ENCODE measurements at regions of chr21 and their contacts with region 1.

Region 1: DNA sequence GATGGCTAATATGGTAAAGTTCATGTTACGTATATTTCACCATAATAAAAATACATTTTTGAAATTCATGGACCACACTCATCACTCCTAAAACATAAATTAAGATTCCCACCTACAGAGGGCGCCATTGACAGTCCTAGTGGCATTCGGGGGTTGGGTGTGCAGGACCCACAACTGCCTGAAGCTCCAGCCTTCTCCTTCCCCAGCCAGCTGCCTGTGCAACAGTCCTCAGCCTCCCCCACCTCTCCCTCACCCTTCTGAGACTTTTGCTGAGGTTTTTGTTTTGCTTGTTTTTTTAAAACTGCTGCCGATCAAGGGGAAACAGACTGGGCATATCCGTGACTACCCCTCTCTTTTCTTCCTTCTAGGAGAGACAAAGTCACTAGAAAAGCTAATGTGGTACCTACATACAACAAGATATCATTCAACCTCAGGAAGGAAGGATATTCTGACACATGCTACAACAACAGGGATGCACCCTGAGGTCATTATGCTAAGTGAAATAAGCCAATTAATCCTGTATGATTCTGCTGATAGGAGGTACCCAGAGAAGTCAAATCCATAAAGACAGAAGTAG is 9.2 kb upstream of the EVA1C start:
- DNase-seq: peak; percentile 81
- H3K4me3 ChIP-seq: no peak overlapping the region
- H3K27ac ChIP-seq: no peak overlapping the region
- H3K4me1 ChIP-seq: no peaks in the 10 kb centered on the region; a peak in 1 of 4 replicates
- H3K27me3 ChIP-seq: no peaks in the 10 kb centered on the region
- CTCF ChIP-seq: peak; percentile 79
- EP300 ChIP-seq: no peak
- RAD21 ChIP-seq: peak; percentile 82

Region 2: GRCh38 chr21:32392880-32393676 is 10.2 kb before region 1 on chr21 and contains the start of gene URB1:
- CTCF ChIA-PET with region 1: interaction called, 15 read pairs
- POLR2A ChIA-PET with region 1: no interaction called
- DNase-seq: peak; percentile 98
- H3K4me3 ChIP-seq: peak within 1 kb of the TSS; percentile 98 to 99
- H3K27ac ChIP-seq: peak within 1 kb of the TSS; percentile 73 to 88; a peak in 3 of 4 replicates
- H3K4me1 ChIP-seq: peaks cover 5 to 32% of the 10 kb centered on the region in 2 experiments; a peak in 3 of 4 replicates
- H3K27me3 ChIP-seq: no peaks in the 10 kb centered on the region
- CTCF ChIP-seq: peak; percentile 12; the same call in 1 of the 2 replicates
- EP300 ChIP-seq: no peak
- RAD21 ChIP-seq: no peak
- polyA plus RNA-seq, gene URB1: 9.9 and 12.5 TPM in 2 replicates

Region 3: GRCh38 chr21:32426592-32427051 is 23.3 kb after region 1 on chr21:
- CTCF ChIA-PET with region 1: no interaction called
- POLR2A ChIA-PET with region 1: no interaction called
- DNase-seq: no peak
- H3K4me3 ChIP-seq: no peak overlapping the region
- H3K27ac ChIP-seq: peak overlapping the region in 1 of 2 experiments; percentile 81; a peak in 2 of 4 replicates
- H3K4me1 ChIP-seq: peaks cover 0 to 21% of the 10 kb centered on the region in 2 experiments; a peak in 3 of 4 replicates
- H3K27me3 ChIP-seq: no peaks in the 10 kb centered on the region
- CTCF ChIP-seq: no peak
- EP300 ChIP-seq: peak in 1 of 2 experiments; percentile 31; a peak in 1 of 4 replicates
- RAD21 ChIP-seq: no peak

Region 4: DNA sequence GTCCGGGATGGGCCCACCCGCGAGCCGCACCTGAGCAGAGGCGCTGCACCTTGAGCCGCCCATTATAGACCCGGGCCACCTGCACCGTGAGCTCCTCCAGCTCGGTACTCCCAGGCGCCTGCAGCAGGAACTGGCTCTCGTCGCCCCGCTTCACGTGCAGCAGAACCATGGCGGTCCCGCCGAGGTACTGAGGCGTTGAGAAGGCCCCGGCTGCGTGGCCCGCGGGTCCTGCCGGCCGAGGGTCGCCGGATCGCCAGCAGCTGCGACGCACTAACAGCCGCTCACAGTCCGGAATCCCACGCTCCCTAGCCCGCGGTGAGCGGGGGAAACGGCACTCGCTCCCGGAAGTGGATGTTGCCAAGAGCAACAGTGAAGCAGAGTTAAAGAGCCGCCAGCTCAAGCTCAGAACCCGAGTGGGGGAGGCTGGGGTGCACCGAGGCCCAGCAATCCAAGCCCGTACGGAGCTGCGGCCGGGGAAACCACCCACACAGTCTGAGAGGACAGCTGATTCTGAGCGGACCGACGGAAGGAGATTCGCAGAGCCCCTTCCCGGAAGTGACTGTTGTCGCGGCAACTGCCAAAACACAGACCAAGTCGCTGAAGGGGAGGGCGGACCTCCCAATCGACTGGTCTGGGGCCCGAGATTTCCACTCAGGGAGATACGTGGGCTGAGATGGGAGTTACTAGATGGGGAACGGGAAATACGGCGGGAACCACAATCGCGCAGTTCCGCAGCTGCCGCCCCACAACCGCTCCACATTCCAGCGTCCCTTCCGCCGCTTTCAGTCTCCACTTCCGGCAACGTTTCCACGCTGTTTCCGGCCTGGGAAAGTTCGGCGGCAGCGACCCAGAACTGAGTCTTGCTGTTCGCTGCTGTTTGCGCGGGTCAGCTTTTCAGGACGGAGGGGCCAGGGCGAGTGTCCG is 209.0 kb after region 1 on chr21 and contains the start of gene CFAP298:
- CTCF ChIA-PET with region 1: interaction called, 18 read pairs
- POLR2A ChIA-PET with region 1: no interaction called
- DNase-seq: peak; percentile 90
- H3K4me3 ChIP-seq: peak within 1 kb of the TSS; percentile 90 to 98
- H3K27ac ChIP-seq: peak within 1 kb of the TSS; percentile 98 to 100
- H3K4me1 ChIP-seq: peaks cover 3 to 8% of the 10 kb centered on the region in 2 experiments; a peak in 3 of 4 replicates
- H3K27me3 ChIP-seq: no peaks in the 10 kb centered on the region
- CTCF ChIP-seq: no peak
- EP300 ChIP-seq: no peak; a peak in 1 of 4 replicates
- RAD21 ChIP-seq: no peak
- polyA plus RNA-seq, gene CFAP298: 57.8 and 59.1 TPM in 2 replicates